ENCODE measurements at regions of chr6 and their contacts with region 1.

Region 1: GRCh38 chr6:2848851-2849250 is 7.2 kb upstream of the SERPINB1 start:
- DNase-seq: no peak
- H3K4me3 ChIP-seq: no peak overlapping the region
- H3K27ac ChIP-seq: no peak overlapping the region
- H3K4me1 ChIP-seq: peaks cover 17 to 22% (median 18%) of the 10 kb centered on the region in 4 donors
- H3K27me3 ChIP-seq: no peaks in the 10 kb centered on the region
- CTCF ChIP-seq: no peak
- EP300 ChIP-seq: no peak
- POLR2A ChIP-seq: no peak

Region 2: DNA sequence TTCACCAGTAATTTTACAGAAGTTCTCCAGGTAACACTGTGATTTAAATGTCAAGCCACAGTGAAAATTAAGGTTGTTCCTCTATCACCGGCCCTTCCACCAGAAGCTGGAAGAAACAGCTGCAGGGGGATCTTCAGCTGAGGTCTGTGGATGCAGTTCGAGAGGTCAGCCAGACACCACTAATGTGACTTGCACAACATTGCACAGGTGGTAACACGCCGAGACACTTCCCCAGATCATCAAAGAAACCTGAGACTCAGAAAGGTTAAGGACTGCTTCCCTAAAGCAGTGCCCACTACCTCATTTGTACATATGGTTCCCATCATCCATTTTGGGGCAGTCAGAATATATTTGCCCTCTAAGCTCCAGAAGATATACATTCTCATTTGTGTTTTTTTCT is 62.3 kb after region 1 on chr6:
- intact Hi-C with region 1: loop called (anchors 5 kb)
- DNase-seq: peak; percentile 68
- H3K4me3 ChIP-seq: no peak overlapping the region
- H3K27ac ChIP-seq: no peak overlapping the region
- H3K4me1 ChIP-seq: peaks cover 0 to 2% (median 1%) of the 10 kb centered on the region in 4 donors
- H3K27me3 ChIP-seq: no peaks in the 10 kb centered on the region
- CTCF ChIP-seq: no peak
- EP300 ChIP-seq: no peak
- POLR2A ChIP-seq: no peak

Region 3: DNA sequence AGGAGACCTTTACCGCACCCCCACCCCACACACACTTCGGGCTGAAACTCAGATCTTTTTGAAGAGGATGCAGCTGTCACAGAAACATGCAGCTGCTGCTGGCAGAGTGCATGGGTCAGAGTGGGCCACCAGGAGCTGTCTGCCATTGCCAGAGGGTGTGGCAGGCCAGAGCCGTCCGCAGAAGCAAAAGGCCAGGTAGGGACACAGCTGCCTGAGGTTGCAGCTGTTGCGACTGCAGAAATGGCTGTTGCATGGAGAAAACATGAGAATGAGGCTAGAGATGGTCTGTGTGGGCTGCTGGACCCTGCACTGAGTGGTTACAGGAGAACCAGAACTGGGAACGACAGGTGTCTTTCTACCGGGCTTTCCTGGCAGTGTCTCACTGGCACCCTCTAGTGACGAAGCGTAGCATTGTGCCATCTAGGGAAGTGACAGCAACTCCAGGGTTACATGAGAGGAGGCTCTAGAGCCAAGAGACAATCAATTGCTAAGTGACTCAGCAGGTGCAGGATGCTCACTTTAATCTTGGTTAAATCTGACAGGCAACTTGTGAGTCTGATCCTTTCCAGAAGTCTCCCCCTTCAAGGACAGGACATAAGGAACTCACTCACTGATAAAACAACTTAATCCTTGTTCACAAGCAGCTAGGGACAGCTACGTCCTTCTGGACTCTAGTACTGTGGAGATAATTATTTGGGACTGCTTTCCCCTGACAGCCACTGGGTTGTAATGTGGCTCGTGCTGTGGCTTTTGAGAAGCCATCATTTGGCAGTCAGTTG is 83.3 kb after region 1 on chr6:
- intact Hi-C with region 1: loop called (anchors 2 kb)
- DNase-seq: peak; percentile 95
- H3K4me3 ChIP-seq: peak overlapping the region in 2 of 4 donors; percentile 8 to 35
- H3K27ac ChIP-seq: no peak overlapping the region
- H3K4me1 ChIP-seq: peaks cover 4 to 9% (median 8%) of the 10 kb centered on the region in 4 donors
- H3K27me3 ChIP-seq: no peaks in the 10 kb centered on the region
- CTCF ChIP-seq: peak; percentile 85 to 97 (median 89)
- EP300 ChIP-seq: no peak
- POLR2A ChIP-seq: no peak

Region 4: GRCh38 chr6:3052481-3053230 is 203.8 kb after region 1 on chr6:
- intact Hi-C with region 1: loop called (anchors 5 kb)
- DNase-seq: no peak
- H3K4me3 ChIP-seq: peak overlapping the region in 1 of 4 donors; percentile 57
- H3K27ac ChIP-seq: peak overlapping the region in 1 of 4 donors; percentile 64
- H3K4me1 ChIP-seq: peaks cover 13 to 29% (median 27%) of the 10 kb centered on the region in 4 donors
- H3K27me3 ChIP-seq: no peaks in the 10 kb centered on the region
- CTCF ChIP-seq: no peak
- EP300 ChIP-seq: no peak
- POLR2A ChIP-seq: no peak